ENCODE measurements at regions of chr2 and their contacts with region 1.

Region 1: GRCh38 chr2:224284134-224284946 is 117.6 kb downstream of the FAM124B start:
- DNase-seq: no peak
- ATAC-seq: peak in 1 of 4 donors; percentile 43
- H3K4me3 ChIP-seq: no peak overlapping the region
- H3K27ac ChIP-seq: no peak overlapping the region
- H3K4me1 ChIP-seq: no peaks in the 10 kb centered on the region
- H3K27me3 ChIP-seq: no peaks in the 10 kb centered on the region
- CTCF ChIP-seq: peak; percentile 80

Region 2: DNA sequence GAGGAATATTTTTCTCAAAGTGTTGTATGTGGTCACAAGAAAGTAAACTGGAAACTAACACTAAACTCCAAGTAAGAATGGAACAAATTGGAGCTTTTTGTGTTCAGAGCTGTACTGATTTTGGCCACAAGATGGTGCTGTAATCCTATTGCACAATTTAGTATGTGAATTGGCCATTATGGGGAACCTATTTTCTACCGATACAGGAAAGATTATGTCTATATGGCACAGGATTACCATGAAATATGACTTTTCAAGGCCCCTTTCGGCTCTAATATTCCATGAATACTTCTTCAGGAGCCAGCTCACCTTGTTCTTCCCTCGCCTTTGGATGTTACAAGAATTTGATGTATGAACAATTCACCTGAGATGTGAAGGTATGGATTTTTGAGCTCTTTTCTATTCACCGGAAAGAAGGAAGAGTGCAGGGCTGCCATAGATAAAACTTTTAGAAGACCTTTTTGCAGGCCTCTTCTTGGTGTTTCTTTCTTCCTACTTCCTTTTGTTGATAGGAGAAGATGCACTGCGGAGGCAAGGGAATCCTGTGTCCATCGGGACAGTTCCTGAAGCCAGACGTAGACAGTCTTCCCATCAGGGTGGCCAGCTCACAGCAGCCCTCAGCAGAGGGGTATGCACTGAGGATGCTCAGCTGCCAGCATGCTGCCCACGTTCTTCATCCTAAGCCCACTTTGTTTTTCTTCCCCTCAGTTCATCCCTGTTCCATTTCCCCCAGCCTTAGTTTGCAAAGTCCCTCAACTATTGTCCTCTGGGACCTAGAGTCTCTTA is 313.8 kb before region 1 on chr2:
- intact Hi-C with region 1: loop called (anchors 2 to 5 kb)
- DNase-seq: no peak
- ATAC-seq: peak in 2 of 4 donors; percentile 60 to 79
- H3K4me3 ChIP-seq: no peak overlapping the region
- H3K27ac ChIP-seq: no peak overlapping the region
- H3K4me1 ChIP-seq: no peaks in the 10 kb centered on the region
- H3K27me3 ChIP-seq: no peaks in the 10 kb centered on the region
- CTCF ChIP-seq: peak; percentile 97

Region 3: DNA sequence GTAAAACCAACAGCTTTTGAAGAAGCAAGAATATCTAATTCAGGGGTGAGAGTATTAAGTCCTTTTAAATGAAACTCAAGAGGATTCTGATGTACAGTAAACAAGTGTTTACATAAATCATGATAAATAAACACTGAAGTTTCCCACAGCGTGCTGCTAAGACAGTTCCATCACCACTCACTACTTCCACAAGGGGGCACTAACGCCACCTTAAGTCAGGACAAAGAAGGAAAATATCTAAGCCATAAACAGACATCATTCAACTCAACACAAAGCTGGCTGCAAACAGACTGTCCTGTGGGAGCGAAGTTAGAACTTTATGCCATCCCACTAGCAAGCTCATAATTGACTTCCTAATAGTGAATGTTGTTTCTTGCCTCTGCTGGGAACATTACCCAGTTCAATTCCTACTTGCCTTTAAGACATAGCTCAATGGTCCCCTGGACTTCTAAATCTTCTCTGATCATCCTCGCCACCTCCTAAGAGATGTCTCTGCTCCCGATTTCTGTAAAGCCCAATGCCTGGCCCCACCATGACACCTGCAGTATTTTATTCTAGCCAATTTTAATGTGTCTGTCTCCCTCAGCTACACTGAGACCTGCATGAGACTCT is 290.6 kb before region 1 on chr2:
- intact Hi-C with region 1: loop called (anchors 1 to 2 kb)
- DNase-seq: peak in 1 of 2 donors; percentile 26
- ATAC-seq: peak; percentile 71 to 87 (median 78)
- H3K4me3 ChIP-seq: no peak overlapping the region
- H3K27ac ChIP-seq: no peak overlapping the region
- H3K4me1 ChIP-seq: no peaks in the 10 kb centered on the region
- H3K27me3 ChIP-seq: no peaks in the 10 kb centered on the region
- CTCF ChIP-seq: peak; percentile 91

Measured in psoas muscle (tissue), 8 donors.